H1 (cell line): ENCODE measurements at regions of chr17 and their contacts with region 1.

Region 1: DNA sequence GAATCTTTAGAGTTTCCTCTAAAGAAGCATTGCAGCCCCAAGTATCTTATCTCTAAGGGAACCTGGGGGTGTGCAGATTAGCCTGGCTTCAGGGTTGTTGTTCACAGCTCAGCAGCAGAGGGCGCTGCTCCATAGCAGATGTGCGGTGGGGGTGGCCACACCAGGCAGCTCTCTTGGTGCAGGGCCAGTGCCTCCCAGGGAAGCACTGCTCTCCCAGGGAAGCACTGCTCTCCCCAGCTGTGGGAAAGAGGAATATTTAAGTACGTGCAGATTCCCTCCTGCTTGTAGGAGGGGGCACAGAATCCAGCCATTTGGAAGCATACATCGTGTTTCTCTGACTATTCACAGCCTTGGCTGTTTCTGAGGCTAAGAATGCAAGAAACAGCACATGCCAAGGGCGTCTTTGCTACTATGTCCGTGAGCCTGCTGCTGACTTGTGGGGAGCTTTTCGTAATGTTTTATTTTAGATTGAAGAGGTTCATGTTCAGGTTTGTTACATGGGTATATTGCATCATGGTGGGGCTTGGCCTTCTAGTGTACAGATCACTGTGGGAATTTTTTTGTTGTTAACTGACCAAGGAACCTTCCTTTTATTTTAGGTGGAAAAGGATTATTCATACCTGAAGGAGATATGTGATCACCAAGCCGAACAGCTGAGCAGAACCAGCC is 217.8 kb downstream of the SPECC1 start:
- DNase-seq: peak; percentile 74 to 93
- H3K4me3 ChIP-seq: no peak overlapping the region
- H3K27ac ChIP-seq: no peak overlapping the region; the same call in 1 of the 2 replicates
- H3K4me1 ChIP-seq: peaks cover 2 to 16% (median 10%) of the 10 kb centered on the region in 4 experiments
- H3K27me3 ChIP-seq: no peaks in the 10 kb centered on the region
- CTCF ChIP-seq: peak; percentile 87 to 95 (median 89)
- EP300 ChIP-seq: no peak
- POLR2A ChIP-seq: no peak
- RAD21 ChIP-seq: peak; percentile 91 to 92

Region 2: DNA sequence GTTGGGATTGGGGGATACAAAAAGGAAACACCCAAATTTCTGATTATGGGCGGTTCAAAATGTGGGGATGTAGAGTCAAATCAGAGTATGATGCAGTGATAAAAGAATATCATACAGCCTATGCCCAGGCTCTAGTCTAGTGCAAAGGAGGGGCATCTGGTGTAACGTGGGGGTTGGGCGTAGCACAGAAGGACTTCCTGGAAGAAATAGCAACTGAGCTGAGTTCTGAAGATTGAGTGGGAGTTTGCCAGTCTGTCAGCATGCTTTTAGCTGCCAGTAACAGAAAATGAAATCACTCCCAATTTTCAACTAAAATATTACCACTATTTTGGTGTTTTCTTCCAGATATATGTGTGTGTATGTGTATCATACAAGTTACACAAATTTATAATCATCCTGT is 20.9 kb before region 1 on chr17:
- CTCF ChIA-PET with region 1: interaction called, 11 read pairs
- POLR2A ChIA-PET with region 1: no interaction called
- DNase-seq: no peak
- H3K4me3 ChIP-seq: no peak overlapping the region
- H3K27ac ChIP-seq: no peak overlapping the region
- H3K4me1 ChIP-seq: peaks cover 4 to 26% (median 12%) of the 10 kb centered on the region in 4 experiments
- H3K27me3 ChIP-seq: no peaks in the 10 kb centered on the region
- CTCF ChIP-seq: no peak
- EP300 ChIP-seq: no peak
- POLR2A ChIP-seq: no peak
- RAD21 ChIP-seq: no peak

Region 3: DNA sequence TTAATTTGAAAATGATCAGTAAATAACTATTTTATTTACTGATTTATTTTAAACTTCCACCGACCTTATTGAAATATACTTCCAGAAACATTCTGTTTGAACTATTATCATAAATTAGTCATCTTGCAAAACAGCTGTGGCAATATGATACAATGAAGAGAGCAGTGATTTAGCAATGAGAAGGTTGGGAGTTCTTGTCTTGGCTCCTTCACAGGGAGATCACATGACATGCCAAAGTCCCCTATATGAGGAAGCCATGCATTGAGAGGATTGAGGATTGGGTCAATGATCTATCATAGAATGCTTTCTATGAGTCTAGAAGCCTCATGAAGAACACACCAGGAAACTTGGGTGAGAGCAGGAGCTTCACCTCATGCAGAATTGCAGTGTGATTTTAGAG is 17.7 kb after region 1 on chr17:
- CTCF ChIA-PET with region 1: interaction called, 12 read pairs
- POLR2A ChIA-PET with region 1: interaction called, 3 read pairs
- DNase-seq: no peak
- H3K4me3 ChIP-seq: no peak overlapping the region
- H3K27ac ChIP-seq: no peak overlapping the region
- H3K4me1 ChIP-seq: no peaks in the 10 kb centered on the region
- H3K27me3 ChIP-seq: no peaks in the 10 kb centered on the region
- CTCF ChIP-seq: no peak
- EP300 ChIP-seq: no peak
- POLR2A ChIP-seq: no peak
- RAD21 ChIP-seq: no peak

Region 4: GRCh38 chr17:20315821-20316220 is 88.9 kb after region 1 on chr17:
- CTCF ChIA-PET with region 1: interaction called, 14 read pairs
- POLR2A ChIA-PET with region 1: no interaction called
- DNase-seq: no peak
- H3K4me3 ChIP-seq: no peak overlapping the region
- H3K27ac ChIP-seq: no peak overlapping the region
- H3K4me1 ChIP-seq: no peaks in the 10 kb centered on the region; a peak in 2 of 7 replicates
- H3K27me3 ChIP-seq: no peaks in the 10 kb centered on the region
- CTCF ChIP-seq: no peak
- EP300 ChIP-seq: no peak
- POLR2A ChIP-seq: no peak
- RAD21 ChIP-seq: no peak